Activated CD4-positive, alpha-beta T cell treated with anti-CD3 and anti-CD28 coated beads for 36 hours (primary cell): ENCODE measurements at regions of chr10 and their contacts with region 1.

Region 1: DNA sequence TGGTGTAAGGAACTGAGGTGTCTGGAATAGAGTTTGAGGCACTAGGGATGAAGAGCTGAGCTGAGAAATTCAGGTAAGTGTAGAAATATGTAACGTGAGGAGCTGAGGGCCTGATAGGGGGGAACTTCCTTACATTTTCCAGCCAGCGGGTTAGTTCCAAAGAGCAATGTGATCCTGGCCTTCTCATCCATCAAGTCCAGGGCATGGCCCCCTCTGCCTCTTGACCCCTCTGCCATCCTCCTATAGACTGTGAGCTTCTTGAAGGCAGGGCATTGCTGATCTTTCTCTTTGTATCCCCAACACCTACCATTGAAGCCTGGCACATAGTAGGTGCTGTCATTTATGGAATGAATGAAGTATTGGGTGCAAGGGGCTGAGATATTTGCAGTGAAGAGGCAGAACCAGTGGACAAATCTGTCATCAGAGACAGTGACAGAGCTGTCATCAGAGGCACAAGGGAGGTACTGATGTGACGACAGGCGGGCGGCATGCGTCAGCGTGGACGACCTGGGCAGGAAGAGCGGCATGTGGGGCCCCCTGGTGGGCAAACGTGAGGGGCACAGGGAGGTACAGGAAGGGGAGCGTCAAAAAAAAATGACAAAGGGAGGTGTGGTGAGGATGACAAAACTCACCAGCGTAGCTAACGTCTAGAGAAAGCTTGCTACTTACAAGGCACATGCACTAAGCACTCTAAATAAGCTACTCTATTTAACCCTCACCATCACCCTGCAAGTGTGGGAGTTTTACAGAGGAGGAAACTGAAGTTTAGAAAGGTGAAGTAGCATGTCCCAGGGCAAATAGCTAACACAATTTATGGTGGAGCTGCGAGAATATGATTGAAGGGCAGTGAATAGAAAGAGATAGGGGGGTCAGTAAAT is 5.2 kb upstream of the CAMK2G start:
- DNase-seq: peak; percentile 98
- ATAC-seq: peak; percentile 86
- H3K4me3 Mint-ChIP-seq: no peak overlapping the region
- H3K27ac Mint-ChIP-seq: peak overlapping the region; percentile 71
- H3K4me1 Mint-ChIP-seq: peaks cover 45% of the 10 kb centered on the region
- H3K27me3 Mint-ChIP-seq: no peaks in the 10 kb centered on the region

Region 2: GRCh38 chr10:73495884-73496674 is 383.5 kb before region 1 on chr10 and contains the start of gene PPP3CB:
- CTCF ChIA-PET with region 1: no interaction called
- POLR2A ChIA-PET with region 1: no interaction called
- intact Hi-C with region 1: loop called in 1 of 2 experiments (anchors 5 kb)
- DNase-seq: peak; percentile 96
- ATAC-seq: peak; percentile 81
- H3K4me3 Mint-ChIP-seq: peak within 1 kb of the TSS; percentile 91
- H3K27ac Mint-ChIP-seq: peak within 1 kb of the TSS; percentile 99
- H3K4me1 Mint-ChIP-seq: peaks cover 45% of the 10 kb centered on the region
- H3K27me3 Mint-ChIP-seq: no peaks in the 10 kb centered on the region
- total RNA-seq, gene PPP3CB: 42.3 to 45.3 TPM

Region 3: GRCh38 chr10:73848821-73849489 is 30.6 kb before region 1 on chr10:
- CTCF ChIA-PET with region 1: interaction called, 456 read pairs
- POLR2A ChIA-PET with region 1: interaction called, 4 read pairs
- intact Hi-C with region 1: loop called (anchors 1 kb)
- DNase-seq: peak; percentile 95
- ATAC-seq: peak; percentile 99
- H3K4me3 Mint-ChIP-seq: no peak overlapping the region
- H3K27ac Mint-ChIP-seq: peak overlapping the region; percentile 85
- H3K4me1 Mint-ChIP-seq: peaks cover 7% of the 10 kb centered on the region
- H3K27me3 Mint-ChIP-seq: no peaks in the 10 kb centered on the region

Region 4: DNA sequence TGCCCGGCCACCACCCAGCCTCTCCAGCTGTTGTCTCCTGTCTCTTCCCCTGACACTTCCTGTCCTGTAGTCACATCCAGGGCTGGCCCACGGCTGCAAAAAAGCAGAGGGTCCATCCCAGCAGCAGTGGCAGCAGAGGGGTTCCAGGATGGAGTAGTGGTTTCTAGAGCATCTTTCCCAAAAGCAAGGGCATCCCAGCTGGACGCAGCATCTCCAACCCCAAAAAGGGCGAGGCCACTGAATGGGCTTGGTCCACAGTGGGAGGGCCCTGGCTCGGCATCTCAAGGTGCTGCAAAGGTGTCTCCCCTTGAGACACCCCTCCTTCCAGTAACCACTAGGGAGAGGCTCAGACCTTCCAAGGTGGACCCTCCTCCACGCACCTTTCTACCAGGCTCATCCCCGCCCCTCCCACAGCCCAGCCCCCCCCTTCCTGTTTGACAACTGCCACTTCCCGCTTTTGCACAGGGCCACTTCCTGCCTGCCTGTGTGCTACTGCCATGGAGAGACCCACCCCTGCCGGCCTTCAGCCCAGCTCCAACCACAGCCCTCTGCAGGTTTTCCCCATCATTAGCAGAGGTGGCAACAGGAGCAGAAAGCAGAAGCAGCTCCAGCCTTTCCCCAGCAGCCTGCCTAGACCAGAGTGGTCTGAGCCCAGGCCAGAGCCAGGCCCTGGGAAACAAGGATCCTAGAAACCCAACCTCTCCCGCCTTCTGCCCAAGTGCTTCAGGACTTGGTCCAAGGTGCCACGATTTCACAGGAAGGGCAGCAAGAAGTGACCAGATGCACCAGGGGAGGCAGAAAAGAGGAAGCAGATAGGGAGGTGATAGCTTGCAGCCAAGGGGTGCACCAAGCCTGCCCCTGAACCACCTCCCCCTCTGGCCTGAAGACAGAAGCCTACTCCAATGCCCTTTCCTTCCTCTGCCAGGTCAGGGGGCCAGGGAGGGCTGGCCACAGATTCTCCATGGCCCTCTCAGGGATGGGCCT is 13.8 kb before region 1 on chr10:
- CTCF ChIA-PET with region 1: interaction called, 80 read pairs
- POLR2A ChIA-PET with region 1: interaction called, 7 read pairs
- intact Hi-C with region 1: no loop called
- DNase-seq: peak; percentile 73
- ATAC-seq: peak; percentile 88
- H3K4me3 Mint-ChIP-seq: peak overlapping the region; percentile 70
- H3K27ac Mint-ChIP-seq: peak overlapping the region; percentile 99
- H3K4me1 Mint-ChIP-seq: peaks cover 77% of the 10 kb centered on the region
- H3K27me3 Mint-ChIP-seq: no peaks in the 10 kb centered on the region

Region 5: DNA sequence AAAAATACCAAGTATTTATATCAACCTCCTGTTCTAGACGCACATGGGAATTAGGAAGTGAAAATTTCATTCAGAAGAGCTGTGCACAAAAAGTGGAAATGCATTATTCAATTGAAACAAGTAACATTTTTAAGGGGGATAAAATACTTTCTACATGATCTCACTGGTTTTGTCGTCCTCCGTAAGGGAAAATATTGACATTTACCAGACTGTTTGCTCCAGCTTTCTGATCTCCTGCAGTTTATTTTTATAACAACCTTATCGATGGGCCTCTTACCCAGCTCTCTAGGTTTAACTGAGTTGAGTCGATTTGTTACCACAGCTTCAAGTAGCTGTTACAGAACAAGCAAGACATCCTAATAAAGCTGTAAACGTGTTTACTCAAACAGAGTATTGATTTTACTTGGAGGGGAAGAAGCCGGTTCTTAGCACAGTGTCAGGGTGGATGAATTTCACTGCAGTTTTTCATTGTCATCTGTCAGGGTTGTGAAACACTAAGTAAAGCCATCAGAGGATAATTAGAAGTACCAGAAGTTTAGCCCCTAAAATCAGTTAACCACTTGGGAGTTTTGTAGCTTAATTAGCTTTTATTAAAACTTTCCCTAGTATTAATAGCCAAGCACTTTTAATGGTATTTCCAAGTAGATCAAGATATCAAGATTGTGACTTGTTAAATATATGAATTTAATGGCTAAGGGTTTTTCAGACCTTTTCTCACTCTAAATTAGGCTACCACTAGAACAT is 804.3 kb after region 1 on chr10:
- CTCF ChIA-PET with region 1: no interaction called
- POLR2A ChIA-PET with region 1: no interaction called
- intact Hi-C with region 1: no loop called
- DNase-seq: no peak
- ATAC-seq: no peak
- H3K4me3 Mint-ChIP-seq: no peak overlapping the region
- H3K27ac Mint-ChIP-seq: no peak overlapping the region
- H3K4me1 Mint-ChIP-seq: peaks cover 18% of the 10 kb centered on the region
- H3K27me3 Mint-ChIP-seq: no peaks in the 10 kb centered on the region